ENCODE measurements at regions of chr16 and their contacts with region 1.

Region 1: GRCh38 chr16:23595951-23596720 is at the start of gene NDUFAB1:
- DNase-seq: peak; percentile 51
- ATAC-seq: peak; percentile 99
- H3K4me3 ChIP-seq: peak within 1 kb of the TSS; percentile 82
- H3K27ac ChIP-seq: peak within 1 kb of the TSS; percentile 77
- H3K4me1 ChIP-seq: peaks cover 16% of the 10 kb centered on the region
- H3K27me3 ChIP-seq: no peaks in the 10 kb centered on the region
- CTCF ChIP-seq: peak; percentile 93 to 99 (median 99)
- EP300 ChIP-seq: no peak
- POLR2A ChIP-seq: peak; percentile 89
- RAD21 ChIP-seq: no peak
- polyA plus RNA-seq, gene NDUFAB1: 99.8 to 226 TPM

Region 2: DNA sequence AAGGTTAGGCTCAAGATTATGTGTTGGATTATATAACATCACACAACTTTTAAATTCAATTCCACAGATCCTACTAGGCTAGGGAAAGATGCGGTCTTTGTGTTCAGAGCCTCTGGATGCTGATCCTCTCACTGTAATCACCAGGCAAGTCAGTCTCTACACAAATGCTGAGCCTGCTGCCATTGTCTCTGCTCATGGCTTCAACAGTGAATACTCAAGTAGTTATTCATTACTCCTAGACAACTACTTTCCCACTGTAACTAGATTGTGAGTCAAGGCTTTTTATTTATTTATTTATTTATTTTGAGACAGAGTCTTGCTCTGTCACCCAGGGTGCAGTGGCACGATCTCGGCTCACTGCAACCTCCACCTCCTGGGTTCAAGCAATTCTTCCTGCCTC is 15.8 kb after region 1 on chr16:
- CTCF ChIA-PET with region 1: interaction called, 12 read pairs
- POLR2A ChIA-PET with region 1: no interaction called
- RAD21 ChIA-PET with region 1: no interaction called
- SMC1A ChIA-PET with region 1: no interaction called
- in situ Hi-C with region 1: no loop called
- intact Hi-C with region 1: no loop called
- DNase-seq: no peak
- ATAC-seq: no peak
- H3K4me3 ChIP-seq: no peak overlapping the region
- H3K27ac ChIP-seq: no peak overlapping the region
- H3K4me1 ChIP-seq: no peaks in the 10 kb centered on the region
- H3K27me3 ChIP-seq: no peaks in the 10 kb centered on the region
- CTCF ChIP-seq: no peak
- EP300 ChIP-seq: no peak
- POLR2A ChIP-seq: no peak
- RAD21 ChIP-seq: no peak

Region 3: GRCh38 chr16:23635958-23636357 is 39.8 kb after region 1 on chr16:
- CTCF ChIA-PET with region 1: interaction called, 12 read pairs
- POLR2A ChIA-PET with region 1: no interaction called
- RAD21 ChIA-PET with region 1: no interaction called
- SMC1A ChIA-PET with region 1: no interaction called
- in situ Hi-C with region 1: loop called (anchors 5 kb)
- intact Hi-C with region 1: no loop called
- DNase-seq: no peak
- ATAC-seq: no peak; the same call in 2 of the 3 replicates
- H3K4me3 ChIP-seq: no peak overlapping the region
- H3K27ac ChIP-seq: no peak overlapping the region
- H3K4me1 ChIP-seq: peaks cover 3% of the 10 kb centered on the region; the same call in 1 of the 2 replicates
- H3K27me3 ChIP-seq: no peaks in the 10 kb centered on the region
- CTCF ChIP-seq: peak in 1 of 3 experiments; percentile 21; a peak in 1 of 6 replicates
- EP300 ChIP-seq: no peak
- POLR2A ChIP-seq: no peak
- RAD21 ChIP-seq: no peak

Region 4: GRCh38 chr16:23640931-23641765 is 45.0 kb after region 1 on chr16 and contains the starts of genes DCTN5 and PALB2:
- CTCF ChIA-PET with region 1: interaction called, 12 read pairs
- POLR2A ChIA-PET with region 1: no interaction called
- RAD21 ChIA-PET with region 1: no interaction called
- SMC1A ChIA-PET with region 1: no interaction called
- in situ Hi-C with region 1: loop called (anchors 5 kb)
- intact Hi-C with region 1: no loop called
- DNase-seq: peak; percentile 83
- ATAC-seq: peak; percentile 96
- H3K4me3 ChIP-seq: peak within 1 kb of the TSS; percentile 92
- H3K27ac ChIP-seq: peak within 1 kb of the TSS; percentile 84
- H3K4me1 ChIP-seq: peaks cover 3% of the 10 kb centered on the region; the same call in 1 of the 2 replicates
- H3K27me3 ChIP-seq: no peaks in the 10 kb centered on the region
- CTCF ChIP-seq: no peak
- EP300 ChIP-seq: no peak
- POLR2A ChIP-seq: peak; percentile 85
- RAD21 ChIP-seq: no peak
- polyA plus RNA-seq, gene DCTN5: 69.2 to 72.5 TPM
- polyA plus RNA-seq, gene PALB2: 9.2 to 15.1 TPM